K562 (cell line): ENCODE measurements at regions of chr22 and their contacts with region 1.

Region 1: GRCh38 chr22:28829358-28830181 is 29.2 kb upstream of the XBP1 start:
- DNase-seq: peak; percentile 59 to 78 (median 74)
- ATAC-seq: peak; percentile 88
- H3K4me3 ChIP-seq: no peak overlapping the region
- H3K27ac ChIP-seq: no peak overlapping the region
- H3K4me1 ChIP-seq: no peaks in the 10 kb centered on the region
- H3K27me3 ChIP-seq: no peaks in the 10 kb centered on the region
- CTCF ChIP-seq: peak; percentile 80 to 92 (median 88)
- EP300 ChIP-seq: no peak
- POLR2A ChIP-seq: no peak
- RAD21 ChIP-seq: peak; percentile 89 to 94

Region 2: DNA sequence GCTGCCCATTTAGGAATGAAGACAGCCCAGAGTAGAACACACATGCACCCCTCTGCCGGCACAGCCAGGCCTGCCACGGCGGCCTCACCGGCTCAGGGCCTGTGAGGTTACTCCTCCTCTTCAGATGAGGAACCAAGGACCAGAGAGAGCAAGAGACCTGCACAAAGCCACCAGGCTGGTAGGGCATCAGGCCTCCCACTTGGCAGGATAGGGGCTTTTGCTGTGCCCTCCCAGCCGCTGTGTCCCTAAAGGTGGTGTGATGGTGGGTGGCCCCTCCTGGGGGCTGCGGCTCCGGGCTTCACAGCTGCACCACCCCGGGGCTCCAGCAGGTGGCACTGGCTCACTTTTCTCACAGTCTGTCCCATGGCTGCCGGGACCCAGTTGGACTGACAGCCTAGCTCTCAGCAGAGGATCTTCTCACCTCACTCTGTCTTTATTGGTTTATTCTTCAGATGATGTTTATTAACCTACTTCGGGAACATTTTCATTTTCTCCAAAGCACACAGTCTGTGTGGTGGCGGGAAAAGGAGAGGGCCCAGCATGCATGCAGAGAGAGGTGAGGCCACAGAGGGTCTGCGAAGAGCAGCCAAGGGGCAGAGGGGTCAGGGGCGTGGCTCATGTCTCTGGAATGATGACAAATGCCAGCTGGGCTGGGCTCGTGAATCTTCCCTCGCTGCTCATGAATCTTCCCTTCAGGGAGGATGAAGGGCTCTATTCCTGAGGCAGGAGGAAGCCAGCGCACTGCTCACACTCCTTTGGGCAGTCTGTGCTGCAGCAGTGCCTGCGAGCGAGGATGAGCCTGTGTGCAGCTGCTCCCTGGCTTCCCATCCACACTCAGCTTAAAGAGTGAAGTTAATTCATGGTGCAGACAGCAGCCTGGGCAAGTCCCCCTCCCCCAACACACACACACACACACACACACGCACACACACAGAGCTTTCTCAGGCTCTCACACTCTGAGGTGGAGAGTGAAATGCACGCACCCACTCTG is 809.4 kb before region 1 on chr22:
- CTCF ChIA-PET with region 1: no interaction called
- POLR2A ChIA-PET with region 1: no interaction called
- in situ Hi-C with region 1: loop called (anchors 10 kb)
- intact Hi-C with region 1: no loop called
- DNase-seq: peak; percentile 67 to 78 (median 75)
- ATAC-seq: peak; percentile 97
- H3K4me3 ChIP-seq: no peak overlapping the region
- H3K27ac ChIP-seq: no peak overlapping the region
- H3K4me1 ChIP-seq: peaks cover 0 to 6% of the 10 kb centered on the region in 2 experiments; a peak in 2 of 5 replicates
- H3K27me3 ChIP-seq: no peaks in the 10 kb centered on the region
- CTCF ChIP-seq: peak; percentile 82 to 85 (median 83)
- EP300 ChIP-seq: no peak
- POLR2A ChIP-seq: no peak
- RAD21 ChIP-seq: peak; percentile 69 to 80

Region 3: DNA sequence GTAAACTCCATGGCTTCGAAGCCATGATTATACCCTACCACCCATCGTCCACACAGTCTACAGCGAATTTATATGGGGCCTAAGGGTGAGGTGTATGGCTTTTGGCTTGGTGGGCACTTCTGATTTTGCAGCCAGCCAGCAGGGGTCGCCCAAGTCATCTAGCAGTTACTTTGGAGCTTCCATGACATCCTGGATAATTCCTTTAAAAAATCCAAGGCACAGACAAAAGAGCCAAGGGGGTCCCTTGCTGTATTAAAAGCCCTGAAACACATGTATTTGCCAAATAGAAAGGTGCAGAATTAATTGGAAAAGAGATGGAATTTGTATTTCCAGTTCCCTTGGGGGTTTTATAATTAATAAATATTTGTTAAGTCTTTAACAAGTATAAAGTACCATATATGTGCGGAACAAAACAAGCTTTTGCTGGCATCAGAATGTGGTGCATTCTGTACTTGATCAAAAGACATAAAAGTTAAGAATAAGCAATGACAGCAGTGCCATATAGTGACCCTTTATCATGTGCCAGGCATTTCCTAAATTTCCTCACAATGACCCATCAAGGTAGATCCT is 777.7 kb before region 1 on chr22:
- CTCF ChIA-PET with region 1: no interaction called
- POLR2A ChIA-PET with region 1: no interaction called
- in situ Hi-C with region 1: loop called (anchors 10 kb)
- intact Hi-C with region 1: no loop called
- DNase-seq: peak; percentile 29 to 63 (median 42)
- ATAC-seq: peak; percentile 61; the same call in 2 of the 3 replicates
- H3K4me3 ChIP-seq: no peak overlapping the region
- H3K27ac ChIP-seq: no peak overlapping the region
- H3K4me1 ChIP-seq: no peaks in the 10 kb centered on the region; a peak in 2 of 5 replicates
- H3K27me3 ChIP-seq: no peaks in the 10 kb centered on the region
- CTCF ChIP-seq: peak; percentile 64 to 79 (median 75)
- EP300 ChIP-seq: no peak
- POLR2A ChIP-seq: no peak
- RAD21 ChIP-seq: peak; percentile 68 to 77

Region 4: DNA sequence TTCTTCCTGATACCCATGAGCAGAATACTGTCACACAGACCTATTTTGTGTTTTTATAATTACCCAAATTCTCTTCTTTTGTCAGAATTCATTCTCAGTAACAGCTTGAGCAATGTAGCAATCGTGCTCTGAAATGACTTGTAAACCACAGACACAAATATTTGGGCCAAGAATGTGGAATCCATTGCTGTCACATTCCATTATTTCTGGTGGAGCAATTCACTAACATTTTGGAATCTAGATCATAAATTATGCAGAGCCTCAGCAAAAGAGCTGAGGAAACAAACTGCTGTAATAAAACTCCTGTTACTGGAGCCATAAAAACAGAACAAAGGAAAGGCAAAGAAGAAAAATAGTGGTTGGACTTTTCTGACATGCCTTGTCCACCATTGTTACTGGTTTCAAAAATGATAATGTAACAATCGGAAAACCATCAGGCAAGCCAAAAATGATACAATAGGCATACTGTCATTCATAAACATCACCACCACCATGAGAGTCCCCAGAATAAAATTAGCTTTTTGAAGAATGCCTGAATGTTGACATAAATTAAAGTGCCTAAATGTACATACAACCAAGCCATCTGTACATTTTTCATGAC is 687.1 kb before region 1 on chr22:
- CTCF ChIA-PET with region 1: no interaction called
- POLR2A ChIA-PET with region 1: no interaction called
- in situ Hi-C with region 1: no loop called
- intact Hi-C with region 1: no loop called
- DNase-seq: no peak
- ATAC-seq: no peak
- H3K4me3 ChIP-seq: no peak overlapping the region
- H3K27ac ChIP-seq: no peak overlapping the region
- H3K4me1 ChIP-seq: no peaks in the 10 kb centered on the region; a peak in 1 of 5 replicates
- H3K27me3 ChIP-seq: no peaks in the 10 kb centered on the region
- CTCF ChIP-seq: no peak
- EP300 ChIP-seq: no peak
- POLR2A ChIP-seq: no peak
- RAD21 ChIP-seq: no peak

Region 5: GRCh38 chr22:28600546-28601143 is 228.9 kb before region 1 on chr22:
- CTCF ChIA-PET with region 1: interaction called, 22 read pairs
- POLR2A ChIA-PET with region 1: no interaction called
- in situ Hi-C with region 1: loop called (anchors 5 kb)
- intact Hi-C with region 1: loop called (anchors 1 kb)
- DNase-seq: peak; percentile 5 to 48 (median 19)
- ATAC-seq: peak; percentile 57
- H3K4me3 ChIP-seq: no peak overlapping the region
- H3K27ac ChIP-seq: no peak overlapping the region
- H3K4me1 ChIP-seq: no peaks in the 10 kb centered on the region
- H3K27me3 ChIP-seq: no peaks in the 10 kb centered on the region
- CTCF ChIP-seq: peak; percentile 20 to 62 (median 36); a peak in 4 of 6 replicates
- EP300 ChIP-seq: no peak
- POLR2A ChIP-seq: no peak
- RAD21 ChIP-seq: peak; percentile 74 to 84

Region 6: DNA sequence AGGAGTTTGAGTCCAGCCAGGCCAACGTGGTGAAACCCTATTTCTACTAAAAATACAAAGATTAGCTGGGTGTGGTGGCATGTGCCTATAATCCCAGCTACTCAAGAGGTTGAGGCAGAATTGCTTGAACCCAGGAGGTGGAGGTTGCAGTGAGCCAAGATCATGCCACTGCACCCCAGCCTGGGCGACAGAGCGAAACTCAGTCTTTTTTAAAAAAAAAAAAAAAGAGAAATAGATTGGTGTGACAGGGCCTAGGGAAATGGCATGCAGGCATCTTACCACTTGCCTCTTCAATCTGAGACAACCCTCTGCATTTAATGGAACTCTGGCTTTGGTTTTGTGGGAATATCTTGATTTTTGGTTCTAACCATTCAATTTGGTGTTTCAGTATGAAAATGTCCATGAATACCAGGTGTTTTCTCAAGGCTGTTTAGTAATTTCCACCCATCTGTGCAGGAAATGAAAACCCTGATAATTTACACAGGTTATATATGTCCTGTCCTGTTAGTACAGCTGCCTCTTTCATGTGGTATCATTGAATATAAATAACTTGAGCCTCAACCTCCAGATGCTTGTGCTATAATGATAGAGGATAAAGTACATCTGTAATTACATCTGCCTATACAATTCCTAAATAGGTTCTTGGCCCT is 37.6 kb before region 1 on chr22:
- CTCF ChIA-PET with region 1: interaction called, 3 read pairs
- POLR2A ChIA-PET with region 1: no interaction called
- in situ Hi-C with region 1: no loop called
- intact Hi-C with region 1: loop called (anchors 5 kb)
- DNase-seq: no peak
- ATAC-seq: no peak; the same call in 1 of the 3 replicates
- H3K4me3 ChIP-seq: no peak overlapping the region
- H3K27ac ChIP-seq: no peak overlapping the region
- H3K4me1 ChIP-seq: peaks cover 3 to 5% of the 10 kb centered on the region in 2 experiments; a peak in 3 of 5 replicates
- H3K27me3 ChIP-seq: no peaks in the 10 kb centered on the region
- CTCF ChIP-seq: no peak
- EP300 ChIP-seq: no peak
- POLR2A ChIP-seq: no peak
- RAD21 ChIP-seq: no peak

Region 7: GRCh38 chr22:28817919-28818909 is 11.4 kb before region 1 on chr22:
- CTCF ChIA-PET with region 1: no interaction called
- POLR2A ChIA-PET with region 1: interaction called, 14 read pairs
- in situ Hi-C with region 1: no loop called
- intact Hi-C with region 1: no loop called
- DNase-seq: no peak
- ATAC-seq: peak; percentile 49; the same call in 2 of the 3 replicates
- H3K4me3 ChIP-seq: no peak overlapping the region
- H3K27ac ChIP-seq: no peak overlapping the region
- H3K4me1 ChIP-seq: peaks cover 0 to 12% of the 10 kb centered on the region in 2 experiments; a peak in 2 of 5 replicates
- H3K27me3 ChIP-seq: no peaks in the 10 kb centered on the region
- CTCF ChIP-seq: no peak
- EP300 ChIP-seq: no peak
- POLR2A ChIP-seq: no peak
- RAD21 ChIP-seq: no peak

Region 8: GRCh38 chr22:28883917-28884746 is 54.6 kb after region 1 on chr22:
- CTCF ChIA-PET with region 1: no interaction called
- POLR2A ChIA-PET with region 1: no interaction called
- in situ Hi-C with region 1: no loop called
- intact Hi-C with region 1: no loop called
- DNase-seq: peak; percentile 17 to 47 (median 38)
- ATAC-seq: peak; percentile 5; the same call in 1 of the 3 replicates
- H3K4me3 ChIP-seq: peak overlapping the region; percentile 40
- H3K27ac ChIP-seq: no peak overlapping the region
- H3K4me1 ChIP-seq: peaks cover 16 to 21% of the 10 kb centered on the region in 2 experiments; a peak in 4 of 5 replicates
- H3K27me3 ChIP-seq: no peaks in the 10 kb centered on the region
- CTCF ChIP-seq: no peak
- EP300 ChIP-seq: no peak
- POLR2A ChIP-seq: no peak
- RAD21 ChIP-seq: no peak

Region 9: DNA sequence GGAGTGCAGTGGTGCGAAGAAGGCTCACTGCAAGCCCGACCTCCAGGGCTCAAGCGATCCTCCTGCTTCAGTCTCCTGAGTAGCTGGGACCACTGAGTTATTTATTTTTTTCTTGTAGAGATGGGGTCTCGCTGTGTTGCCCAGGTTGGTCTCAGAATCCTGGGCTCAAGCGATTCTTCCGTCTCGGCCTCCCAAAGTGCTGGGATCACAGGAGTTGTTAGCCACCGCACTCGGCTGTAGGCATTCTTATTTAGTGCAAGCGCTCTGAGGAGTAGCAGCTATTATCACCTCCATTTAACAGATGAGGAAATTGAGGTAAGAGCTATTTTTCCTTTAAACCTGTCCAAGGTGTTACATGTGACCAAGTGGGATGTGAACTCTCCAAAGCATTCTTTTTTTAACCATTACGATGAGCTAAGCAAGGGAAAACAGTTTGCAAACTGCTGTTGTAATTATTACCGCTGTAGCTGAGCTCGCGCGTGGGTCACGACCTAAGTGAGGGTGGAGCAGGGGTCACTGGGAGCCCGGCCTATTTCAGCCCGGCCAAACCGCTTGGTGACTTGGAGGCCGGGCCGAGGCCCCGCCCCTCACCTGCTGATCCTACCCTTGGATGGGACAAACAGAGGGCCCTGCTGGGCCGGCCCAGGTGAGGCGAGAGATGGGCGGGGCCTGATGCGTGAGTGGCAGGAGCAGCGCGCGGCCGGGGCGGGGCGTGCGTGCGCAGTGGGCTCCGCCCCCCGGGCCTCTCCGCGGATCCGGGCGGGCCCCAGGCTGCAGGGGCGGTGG is 242.8 kb after region 1 on chr22:
- CTCF ChIA-PET with region 1: no interaction called
- POLR2A ChIA-PET with region 1: no interaction called
- in situ Hi-C with region 1: no loop called
- intact Hi-C with region 1: no loop called
- DNase-seq: peak; percentile 88 to 95 (median 94)
- ATAC-seq: peak; percentile 99
- H3K4me3 ChIP-seq: peak overlapping the region; percentile 51
- H3K27ac ChIP-seq: peak overlapping the region; percentile 16
- H3K4me1 ChIP-seq: peaks cover 4 to 34% of the 10 kb centered on the region in 2 experiments; a peak in 4 of 5 replicates
- H3K27me3 ChIP-seq: no peaks in the 10 kb centered on the region
- CTCF ChIP-seq: no peak
- EP300 ChIP-seq: no peak
- POLR2A ChIP-seq: no peak
- RAD21 ChIP-seq: no peak